ENCODE measurements at regions of chr12 and their contacts with region 1.

Region 1: GRCh38 chr12:111546758-111547383 is 52.2 kb downstream of the ATXN2 start:
- DNase-seq: no peak
- H3K4me3 Mint-ChIP-seq: peak overlapping the region; percentile 47
- H3K27ac Mint-ChIP-seq: peak overlapping the region; percentile 77
- H3K4me1 Mint-ChIP-seq: peaks cover 20% of the 10 kb centered on the region
- H3K27me3 Mint-ChIP-seq: no peaks in the 10 kb centered on the region

Region 2: GRCh38 chr12:111505601-111506036 is 41.3 kb before region 1 on chr12:
- intact Hi-C with region 1: loop called (anchors 2 kb)
- DNase-seq: no peak
- H3K4me3 Mint-ChIP-seq: no peak overlapping the region
- H3K27ac Mint-ChIP-seq: peak overlapping the region; percentile 54
- H3K4me1 Mint-ChIP-seq: peaks cover 10% of the 10 kb centered on the region
- H3K27me3 Mint-ChIP-seq: no peaks in the 10 kb centered on the region

Region 3: GRCh38 chr12:111599459-111600204 is 52.8 kb after region 1 on chr12:
- intact Hi-C with region 1: loop called (anchors 2 kb)
- DNase-seq: peak; percentile 95
- H3K4me3 Mint-ChIP-seq: peak overlapping the region; percentile 78
- H3K27ac Mint-ChIP-seq: peak overlapping the region; percentile 72
- H3K4me1 Mint-ChIP-seq: peaks cover 17% of the 10 kb centered on the region
- H3K27me3 Mint-ChIP-seq: no peaks in the 10 kb centered on the region

Region 4: DNA sequence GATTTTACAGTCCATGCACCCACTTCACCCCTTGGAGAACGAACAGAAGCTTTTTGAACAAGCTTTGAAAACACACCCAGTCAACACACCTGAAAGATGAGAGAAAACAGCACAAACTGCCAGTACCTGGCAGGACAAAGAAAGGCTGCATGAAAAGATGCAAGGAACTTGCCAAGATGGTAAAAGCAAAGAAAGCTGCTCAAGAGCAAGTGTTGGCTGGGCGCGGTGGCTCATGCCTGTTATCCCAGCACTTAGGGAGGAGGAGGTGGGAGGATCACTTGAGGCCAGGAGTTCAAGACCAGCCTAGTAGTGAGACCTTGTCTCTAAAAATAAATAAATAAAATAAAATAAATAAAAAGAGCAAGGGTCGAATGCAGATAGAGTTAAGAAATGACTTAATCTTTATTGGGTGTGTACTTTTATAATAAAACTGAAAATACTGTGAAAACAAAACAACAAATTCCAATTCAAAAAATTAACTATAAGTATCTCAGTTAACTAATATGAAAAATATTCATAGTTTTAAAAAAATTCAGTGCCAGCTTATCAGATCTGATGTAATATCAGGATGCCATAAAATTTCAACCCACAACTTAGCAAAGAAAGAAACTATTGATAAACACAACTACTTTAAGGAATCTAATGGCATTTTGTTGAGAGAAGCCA is 776.1 kb after region 1 on chr12:
- intact Hi-C with region 1: no loop called
- DNase-seq: no peak
- H3K4me3 Mint-ChIP-seq: no peak overlapping the region
- H3K27ac Mint-ChIP-seq: no peak overlapping the region
- H3K4me1 Mint-ChIP-seq: peaks cover 1% of the 10 kb centered on the region
- H3K27me3 Mint-ChIP-seq: no peaks in the 10 kb centered on the region

Measured in activated CD4-positive, alpha-beta T cell treated with anti-CD3 and anti-CD28 coated beads, Interleukin-2, amount 10 ng/mL, durations not matched to agents 24 days and 14 days (primary cell).